AG04449 (cell line): ENCODE measurements at regions of chr4 and their contacts with region 1.

Region 1: GRCh38 chr4:1693129-1693896 is 9.2 kb upstream of the FAM53A start:
- DNase-seq: no peak
- H3K4me3 ChIP-seq: no peak overlapping the region
- CTCF ChIP-seq: peak; percentile 93

Region 2: GRCh38 chr4:1674682-1675081 is 18.6 kb before region 1 on chr4:
- CTCF ChIA-PET with region 1: interaction called, 24 read pairs
- POLR2A ChIA-PET with region 1: no interaction called
- DNase-seq: no peak
- H3K4me3 ChIP-seq: no peak overlapping the region
- CTCF ChIP-seq: no peak

Region 3: GRCh38 chr4:1712216-1713002 is 19.1 kb after region 1 on chr4 and contains the start of gene SLBP:
- CTCF ChIA-PET with region 1: interaction called, 268 read pairs
- POLR2A ChIA-PET with region 1: interaction called, 7 read pairs
- DNase-seq: no peak
- H3K4me3 ChIP-seq: peak within 1 kb of the TSS; percentile 89
- CTCF ChIP-seq: no peak

Region 4: GRCh38 chr4:1746265-1746691 is 53.0 kb after region 1 on chr4:
- CTCF ChIA-PET with region 1: interaction called, 11 read pairs
- POLR2A ChIA-PET with region 1: no interaction called
- DNase-seq: no peak
- H3K4me3 ChIP-seq: no peak overlapping the region
- CTCF ChIP-seq: peak; percentile 98

Region 5: GRCh38 chr4:1910643-1911042 is 217.3 kb after region 1 on chr4:
- CTCF ChIA-PET with region 1: interaction called, 13 read pairs
- POLR2A ChIA-PET with region 1: no interaction called
- DNase-seq: peak; percentile 12
- H3K4me3 ChIP-seq: no peak overlapping the region
- CTCF ChIP-seq: peak; percentile 69